ENCODE measurements at regions of chr15 and their contacts with region 1.

Region 1: GRCh38 chr15:62742409-62743171 is 300.0 kb upstream of the TPM1 start:
- DNase-seq: peak; percentile 70 to 84
- ATAC-seq: peak; percentile 75 to 87
- H3K4me3 ChIP-seq: peak overlapping the region; percentile 40
- H3K27ac ChIP-seq: peak overlapping the region; percentile 75 to 78
- H3K4me1 ChIP-seq: peaks cover 44% of the 10 kb centered on the region
- CTCF ChIP-seq: peak; percentile 96
- EP300 ChIP-seq: peak in 1 of 2 experiments; percentile 23; a peak in 1 of 5 replicates
- POLR2A ChIP-seq: no peak
- RAD21 ChIP-seq: peak; percentile 66 to 70

Region 2: GRCh38 chr15:62389885-62390790 is 352.5 kb before region 1 on chr15:
- CTCF ChIA-PET with region 1: interaction called, 20 read pairs
- POLR2A ChIA-PET with region 1: interaction called, 16 read pairs
- DNase-seq: peak; percentile 79 to 82
- ATAC-seq: peak; percentile 79 to 83
- H3K4me3 ChIP-seq: peak within 1 kb of the TSS; percentile 88
- H3K27ac ChIP-seq: peak within 1 kb of the TSS; percentile 92 to 95
- H3K4me1 ChIP-seq: peaks cover 14% of the 10 kb centered on the region
- CTCF ChIP-seq: no peak
- EP300 ChIP-seq: no peak
- POLR2A ChIP-seq: peak; percentile 97
- RAD21 ChIP-seq: peak in 1 of 2 experiments; percentile 11; a peak in 3 of 5 replicates

Region 3: DNA sequence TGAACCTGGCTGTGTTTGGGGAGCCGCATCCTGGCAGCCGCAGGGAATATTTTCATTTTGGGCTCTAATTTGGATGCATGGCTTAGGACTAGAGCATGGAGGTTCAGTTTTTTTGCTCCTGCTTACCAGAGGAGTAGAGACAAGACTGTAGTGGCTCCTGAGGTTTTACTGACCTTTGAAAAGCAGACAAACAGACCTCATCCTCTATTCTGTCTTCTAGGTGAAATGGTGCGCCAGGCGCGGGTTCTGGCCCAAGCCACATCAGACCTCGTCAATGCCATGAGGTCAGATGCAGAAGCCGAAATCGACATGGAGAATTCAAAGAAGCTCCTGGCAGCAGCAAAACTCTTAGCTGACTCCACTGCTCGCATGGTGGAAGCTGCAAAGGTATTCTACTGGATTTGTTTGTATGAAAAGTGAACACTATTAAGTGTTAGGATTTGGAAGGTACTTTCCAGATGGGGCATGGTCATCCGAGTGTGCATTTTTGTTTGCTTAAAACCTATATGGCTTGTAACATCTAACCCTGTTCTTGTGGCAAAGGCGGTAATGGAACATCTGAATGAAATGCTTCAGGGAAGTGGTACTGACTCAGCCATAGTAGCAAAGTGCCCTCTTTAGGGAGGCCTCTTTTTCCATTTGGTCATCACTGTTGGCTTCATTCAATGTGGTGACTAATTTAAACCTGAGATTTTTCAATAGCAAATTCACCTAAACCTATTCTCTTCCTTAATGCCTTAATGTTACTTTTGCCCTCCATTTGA is 30.7 kb before region 1 on chr15:
- CTCF ChIA-PET with region 1: interaction called, 13 read pairs
- POLR2A ChIA-PET with region 1: no interaction called
- DNase-seq: no peak
- ATAC-seq: no peak
- H3K4me3 ChIP-seq: no peak overlapping the region
- H3K27ac ChIP-seq: no peak overlapping the region
- H3K4me1 ChIP-seq: no peaks in the 10 kb centered on the region
- CTCF ChIP-seq: no peak
- EP300 ChIP-seq: no peak
- POLR2A ChIP-seq: no peak
- RAD21 ChIP-seq: no peak

Region 4: GRCh38 chr15:62732078-62732477 is 10.5 kb before region 1 on chr15:
- CTCF ChIA-PET with region 1: interaction called, 104 read pairs
- POLR2A ChIA-PET with region 1: interaction called, 6 read pairs
- DNase-seq: no peak
- ATAC-seq: no peak
- H3K4me3 ChIP-seq: no peak overlapping the region
- H3K27ac ChIP-seq: no peak overlapping the region
- H3K4me1 ChIP-seq: no peaks in the 10 kb centered on the region
- CTCF ChIP-seq: no peak
- EP300 ChIP-seq: no peak
- POLR2A ChIP-seq: no peak
- RAD21 ChIP-seq: no peak

Region 5: DNA sequence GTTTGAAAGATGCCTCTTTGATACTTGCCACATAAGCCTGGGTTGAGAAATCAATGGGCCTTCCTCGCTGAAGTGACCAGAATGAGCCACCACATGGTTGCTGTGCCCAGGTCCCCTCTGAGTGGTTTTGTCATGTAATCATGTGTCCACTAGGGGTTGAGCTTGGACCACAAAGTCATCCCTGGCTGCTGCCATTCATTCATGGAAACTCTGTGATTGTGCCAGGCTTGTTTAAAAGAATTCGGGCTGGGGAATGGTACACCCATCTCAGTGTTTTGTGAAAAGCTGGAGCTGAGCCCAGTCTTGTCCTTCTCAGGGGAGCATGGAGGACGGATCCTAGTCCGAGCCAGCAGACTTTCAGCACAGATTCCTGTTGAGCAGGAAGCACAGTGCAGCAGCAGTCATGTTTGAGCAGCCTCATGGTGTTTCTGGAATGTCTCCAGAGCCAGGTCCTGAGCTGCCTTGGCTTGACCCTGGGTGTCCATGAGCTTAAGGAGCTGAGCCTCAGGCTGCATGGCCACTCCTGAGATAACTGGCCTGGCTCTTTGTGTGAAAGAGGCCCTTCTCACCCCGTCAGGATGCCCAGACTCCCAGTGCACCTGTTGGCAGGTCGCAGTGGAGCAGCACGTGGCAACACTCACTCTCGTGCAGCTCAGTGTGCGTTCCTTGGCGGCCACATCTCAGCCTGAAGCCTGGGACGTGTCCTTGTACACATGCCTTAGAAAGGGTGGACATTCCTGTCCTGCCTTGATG is 39.6 kb after region 1 on chr15:
- CTCF ChIA-PET with region 1: interaction called, 10 read pairs
- POLR2A ChIA-PET with region 1: interaction called, 3 read pairs
- DNase-seq: peak; percentile 81 to 90
- ATAC-seq: peak; percentile 93 to 95
- H3K4me3 ChIP-seq: no peak overlapping the region
- H3K27ac ChIP-seq: peak overlapping the region; percentile 71 to 82
- H3K4me1 ChIP-seq: peaks cover 42% of the 10 kb centered on the region
- CTCF ChIP-seq: peak; percentile 98
- EP300 ChIP-seq: no peak
- POLR2A ChIP-seq: no peak
- RAD21 ChIP-seq: peak; percentile 100